ENCODE measurements at regions of chrX and their contacts with region 1.

Region 1: DNA sequence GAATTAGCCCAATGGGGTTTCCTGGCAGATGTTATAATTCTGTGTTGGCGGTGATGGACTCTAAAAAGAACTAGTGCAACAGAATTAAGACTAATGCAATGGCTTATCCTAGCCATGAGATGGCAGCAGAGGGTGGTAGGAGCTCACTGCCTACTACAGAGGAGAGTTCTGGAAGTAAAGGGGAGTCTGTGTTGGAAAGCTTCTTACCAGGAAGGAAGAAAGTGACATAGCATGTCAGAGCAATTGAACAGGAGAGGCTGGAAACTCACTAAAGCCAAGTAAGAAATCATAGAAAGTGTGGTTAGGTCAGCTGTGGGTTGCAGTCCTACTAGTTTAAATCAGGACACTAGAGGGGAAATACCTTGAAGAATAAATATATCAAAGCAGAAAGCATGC is 6.3 kb upstream of the TRPC5OS start:
- DNase-seq: peak; percentile 59
- ATAC-seq: peak; percentile 51
- H3K4me3 ChIP-seq: no peak overlapping the region
- H3K27ac ChIP-seq: no peak overlapping the region
- H3K4me1 ChIP-seq: no peaks in the 10 kb centered on the region
- H3K27me3 ChIP-seq: no peaks in the 10 kb centered on the region
- CTCF ChIP-seq: peak; percentile 64

Region 2: DNA sequence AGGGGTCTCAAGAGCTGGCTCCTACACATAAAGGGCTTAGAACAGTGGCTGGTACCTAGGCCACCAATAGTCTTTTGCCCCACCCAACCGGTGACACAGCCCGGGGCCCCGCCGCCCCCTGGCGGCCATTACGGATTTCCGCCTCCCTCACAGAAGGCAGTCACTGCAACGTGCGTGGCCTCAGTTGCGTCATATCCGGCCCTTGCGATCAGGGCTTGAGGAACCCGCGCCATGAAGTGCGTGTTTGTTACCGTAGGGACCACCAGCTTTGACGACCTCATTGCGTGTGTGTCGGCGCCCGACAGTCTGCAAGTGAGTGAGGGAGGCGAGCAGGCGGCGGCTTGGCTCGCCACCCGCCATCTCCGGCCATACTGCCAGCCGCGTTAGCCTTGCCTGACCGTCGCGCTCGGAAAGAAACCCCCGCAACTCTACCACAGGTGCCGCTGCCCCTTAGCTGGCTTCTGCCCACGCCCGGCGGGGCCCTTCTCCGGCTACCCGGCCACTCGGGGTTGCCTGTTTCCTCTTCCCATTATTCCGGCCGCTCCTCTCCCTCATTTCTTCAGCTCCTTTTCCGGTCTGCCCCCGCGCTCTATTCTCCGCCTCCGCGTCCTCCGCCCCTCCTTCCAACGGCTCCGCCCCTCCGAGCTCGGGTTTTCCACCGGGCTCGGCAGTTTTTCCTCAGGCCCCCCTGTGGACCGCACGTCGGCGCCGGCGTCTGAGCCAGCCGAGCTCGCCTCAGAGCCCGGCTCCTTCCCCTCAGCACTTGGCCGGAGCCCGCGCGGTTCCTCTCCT is 188.5 kb before region 1 on chrX and contains the start of gene ALG13:
- CTCF ChIA-PET with region 1: no interaction called
- POLR2A ChIA-PET with region 1: no interaction called
- intact Hi-C with region 1: no loop called
- DNase-seq: peak; percentile 87
- ATAC-seq: peak; percentile 92
- H3K4me3 ChIP-seq: peak within 1 kb of the TSS; percentile 89
- H3K27ac ChIP-seq: peak within 1 kb of the TSS; percentile 97
- H3K4me1 ChIP-seq: peaks cover 11% of the 10 kb centered on the region
- H3K27me3 ChIP-seq: no peaks in the 10 kb centered on the region
- CTCF ChIP-seq: peak; percentile 67
- total RNA-seq, gene ALG13: 79.0 and 101 TPM in 2 replicates

Region 3: DNA sequence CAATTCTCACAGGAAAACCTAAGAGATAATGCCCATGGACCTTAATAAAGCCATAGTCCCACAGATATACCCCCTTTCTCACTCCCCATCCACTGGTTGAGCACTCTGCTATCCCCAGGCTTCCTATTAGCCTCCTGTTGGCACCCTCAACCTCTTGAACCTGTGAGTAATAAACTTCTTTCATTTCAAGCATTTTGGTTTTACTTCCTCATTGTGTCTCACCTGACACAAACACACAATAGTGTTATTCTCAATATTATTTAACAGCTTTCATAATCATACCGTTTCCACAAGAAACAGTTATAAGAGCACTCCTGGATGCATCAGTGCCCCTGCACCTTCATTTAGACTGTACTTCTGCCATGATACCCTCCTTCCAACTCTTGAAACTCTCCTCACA is 156.1 kb after region 1 on chrX:
- CTCF ChIA-PET with region 1: no interaction called
- POLR2A ChIA-PET with region 1: no interaction called
- intact Hi-C with region 1: loop called (anchors 5 kb)
- DNase-seq: no peak
- ATAC-seq: no peak
- H3K4me3 ChIP-seq: no peak overlapping the region
- H3K27ac ChIP-seq: no peak overlapping the region
- H3K4me1 ChIP-seq: no peaks in the 10 kb centered on the region
- H3K27me3 ChIP-seq: no peaks in the 10 kb centered on the region
- CTCF ChIP-seq: no peak

Region 4: DNA sequence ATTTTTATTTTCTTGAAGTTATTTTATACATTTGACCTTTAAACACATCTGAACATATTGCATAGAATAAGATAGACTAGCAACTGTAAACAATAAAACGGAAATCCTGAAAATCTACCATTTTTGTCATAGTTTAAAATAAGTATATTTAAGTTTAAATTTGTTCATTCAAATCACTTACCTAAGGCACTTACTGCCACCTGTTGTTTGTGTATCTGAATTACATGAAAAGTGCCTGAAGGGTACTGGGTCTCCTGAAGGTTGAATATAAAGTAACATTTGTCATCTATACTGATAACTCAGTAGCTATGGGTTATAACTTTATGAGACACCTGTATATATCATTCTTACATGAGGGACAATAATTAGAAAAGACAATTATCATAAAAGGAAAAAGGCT is 174.4 kb after region 1 on chrX:
- CTCF ChIA-PET with region 1: no interaction called
- POLR2A ChIA-PET with region 1: no interaction called
- intact Hi-C with region 1: loop called (anchors 2 kb)
- DNase-seq: peak; percentile 52
- ATAC-seq: no peak
- H3K4me3 ChIP-seq: no peak overlapping the region
- H3K27ac ChIP-seq: no peak overlapping the region
- H3K4me1 ChIP-seq: no peaks in the 10 kb centered on the region
- H3K27me3 ChIP-seq: no peaks in the 10 kb centered on the region
- CTCF ChIP-seq: peak; percentile 48